ENCODE measurements at regions of chr18 and their contacts with region 1.

Region 1: DNA sequence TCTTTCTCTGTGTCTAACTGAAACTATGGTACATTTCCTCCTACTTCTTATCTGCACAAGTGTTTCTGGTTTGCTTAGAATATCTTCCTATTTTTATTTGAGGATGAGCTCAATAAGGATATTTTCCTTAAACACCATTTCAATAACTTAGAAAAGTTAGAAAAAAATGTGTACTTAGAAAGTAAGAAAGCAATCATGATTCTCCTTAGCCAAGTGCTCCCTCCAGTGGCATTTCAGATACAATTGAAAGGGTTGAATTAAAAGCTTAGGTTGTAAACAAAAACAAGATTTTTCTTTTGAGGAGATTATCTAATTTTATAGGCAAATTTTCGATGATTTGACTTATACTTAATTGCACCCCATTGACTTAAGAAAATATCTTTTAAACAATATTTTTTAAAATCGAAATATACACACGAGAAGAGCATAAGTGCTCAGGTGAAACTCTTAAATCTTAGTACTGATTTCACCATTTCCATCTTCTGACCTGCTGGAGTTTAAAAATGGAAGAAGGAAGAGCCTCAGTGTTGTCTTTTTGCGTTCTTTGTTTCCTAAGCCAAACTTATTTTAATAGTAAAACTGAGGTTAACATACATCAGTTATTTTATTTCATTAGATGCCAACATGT is 26.9 kb downstream of the C18orf63 start:
- DNase-seq: no peak
- H3K4me3 Mint-ChIP-seq: no peak overlapping the region
- H3K27ac Mint-ChIP-seq: no peak overlapping the region
- H3K4me1 Mint-ChIP-seq: peaks cover 2% of the 10 kb centered on the region
- H3K27me3 Mint-ChIP-seq: peaks cover 28% of the 10 kb centered on the region

Region 2: GRCh38 chr18:73458186-73458964 is 884.2 kb before region 1 on chr18:
- intact Hi-C with region 1: no loop called
- DNase-seq: no peak
- H3K4me3 Mint-ChIP-seq: no peak overlapping the region
- H3K27ac Mint-ChIP-seq: no peak overlapping the region
- H3K4me1 Mint-ChIP-seq: no peaks in the 10 kb centered on the region
- H3K27me3 Mint-ChIP-seq: no peaks in the 10 kb centered on the region

Region 3: GRCh38 chr18:73545315-73545896 is 797.1 kb before region 1 on chr18:
- intact Hi-C with region 1: no loop called
- DNase-seq: no peak
- H3K4me3 Mint-ChIP-seq: no peak overlapping the region
- H3K27ac Mint-ChIP-seq: no peak overlapping the region
- H3K4me1 Mint-ChIP-seq: no peaks in the 10 kb centered on the region
- H3K27me3 Mint-ChIP-seq: no peaks in the 10 kb centered on the region

Region 4: GRCh38 chr18:74040459-74041332 is 301.8 kb before region 1 on chr18:
- intact Hi-C with region 1: loop called (anchors 2 kb)
- DNase-seq: peak; percentile 56
- H3K4me3 Mint-ChIP-seq: no peak overlapping the region
- H3K27ac Mint-ChIP-seq: no peak overlapping the region
- H3K4me1 Mint-ChIP-seq: no peaks in the 10 kb centered on the region
- H3K27me3 Mint-ChIP-seq: no peaks in the 10 kb centered on the region

Region 5: DNA sequence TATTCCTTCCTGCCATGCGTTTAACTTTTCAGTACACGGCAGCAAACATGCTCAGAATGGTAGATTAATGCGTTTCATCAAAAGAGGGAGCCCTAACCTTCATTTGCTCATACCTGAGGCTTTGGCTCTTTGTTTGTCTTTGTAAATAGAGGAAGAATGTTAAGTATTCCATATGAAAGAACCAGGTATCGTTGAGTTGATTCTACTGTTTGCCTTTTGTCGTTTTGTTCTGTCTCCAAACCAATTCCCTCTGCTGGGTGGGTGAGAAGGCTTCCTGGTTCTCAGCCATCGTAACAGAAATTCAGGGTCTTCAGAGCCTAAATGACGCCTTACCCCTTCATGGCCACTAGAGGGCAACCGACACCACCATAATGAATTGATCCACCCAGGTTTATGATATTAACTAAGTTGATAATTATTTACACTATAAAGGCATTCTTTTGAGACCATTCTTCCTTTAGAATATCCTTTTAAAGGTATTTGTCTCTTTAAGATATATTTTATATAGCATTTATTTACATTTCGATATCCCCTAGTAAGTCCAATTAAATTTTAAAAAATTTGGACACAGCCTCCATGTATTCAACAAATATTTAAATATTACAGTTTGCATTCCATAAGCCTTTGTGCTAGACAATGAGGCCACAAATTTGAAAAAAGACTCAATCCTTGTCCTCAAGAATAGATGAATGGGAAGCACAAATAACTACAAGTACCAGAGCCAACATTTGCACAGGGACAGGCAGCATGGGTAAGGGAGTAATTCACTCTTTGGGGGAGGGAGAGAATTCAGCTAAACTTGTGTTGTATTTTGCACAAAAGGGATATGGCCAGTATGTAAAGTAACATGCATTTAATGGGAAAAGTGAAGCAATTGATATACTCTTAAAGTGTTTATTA is 146.1 kb before region 1 on chr18:
- intact Hi-C with region 1: loop called (anchors 1 kb)
- DNase-seq: peak; percentile 30
- H3K4me3 Mint-ChIP-seq: peak overlapping the region; percentile 73
- H3K27ac Mint-ChIP-seq: no peak overlapping the region
- H3K4me1 Mint-ChIP-seq: peaks cover 6% of the 10 kb centered on the region
- H3K27me3 Mint-ChIP-seq: peaks cover 7% of the 10 kb centered on the region

Region 6: DNA sequence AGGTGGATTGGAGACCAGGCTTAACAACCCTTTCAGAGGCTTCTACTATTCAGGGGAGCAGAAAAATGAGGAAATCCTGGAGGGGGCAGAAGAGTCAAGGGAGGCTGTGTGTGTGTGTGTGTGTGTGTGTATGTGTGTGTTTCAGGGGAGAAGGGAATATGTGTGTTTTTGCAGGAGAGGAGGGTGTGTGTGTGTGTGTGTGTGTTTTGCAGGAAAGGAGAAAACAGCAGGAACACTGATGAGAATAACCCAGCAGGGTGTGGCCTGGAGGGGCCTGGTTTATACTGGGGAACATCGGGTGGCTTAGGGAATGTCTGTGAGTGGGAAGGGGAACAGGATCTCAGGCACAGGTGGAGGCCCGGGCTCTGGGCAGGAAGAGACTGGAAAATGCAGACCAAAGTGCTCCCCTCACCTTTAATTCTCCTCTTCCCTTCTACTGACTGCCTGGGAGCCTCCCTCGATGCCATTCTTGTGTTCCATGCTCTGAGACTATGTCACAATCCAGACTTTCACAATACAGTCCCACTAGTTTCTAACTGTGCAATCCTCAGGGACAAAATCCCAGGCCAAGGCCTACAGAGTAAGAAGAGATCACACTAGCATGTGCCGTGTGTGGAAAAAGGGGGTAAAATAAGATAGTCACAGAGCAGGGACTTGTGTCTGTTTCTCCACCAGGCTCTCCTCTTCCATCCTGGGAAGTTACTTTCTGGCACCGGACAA is 60.7 kb before region 1 on chr18:
- intact Hi-C with region 1: loop called (anchors 10 kb)
- DNase-seq: no peak
- H3K4me3 Mint-ChIP-seq: no peak overlapping the region
- H3K27ac Mint-ChIP-seq: no peak overlapping the region
- H3K4me1 Mint-ChIP-seq: peaks cover 9% of the 10 kb centered on the region
- H3K27me3 Mint-ChIP-seq: peaks cover 3% of the 10 kb centered on the region

Measured in activated T-helper 2 cell treated with anti-CD3 and anti-CD28 coated beads, Interferon-gamma antibody, Interleukin-2, Interleukin-4, amounts not matched to agents 10 μg/mL and 5 μg/mL and 100 μg/mL, durations not matched to agents 14 hours and 24 hours and 36 hours (primary cell).